Gastrocnemius medialis (tissue), 4 donors: ENCODE measurements at regions of chr1 and their contacts with region 1.

Region 1: DNA sequence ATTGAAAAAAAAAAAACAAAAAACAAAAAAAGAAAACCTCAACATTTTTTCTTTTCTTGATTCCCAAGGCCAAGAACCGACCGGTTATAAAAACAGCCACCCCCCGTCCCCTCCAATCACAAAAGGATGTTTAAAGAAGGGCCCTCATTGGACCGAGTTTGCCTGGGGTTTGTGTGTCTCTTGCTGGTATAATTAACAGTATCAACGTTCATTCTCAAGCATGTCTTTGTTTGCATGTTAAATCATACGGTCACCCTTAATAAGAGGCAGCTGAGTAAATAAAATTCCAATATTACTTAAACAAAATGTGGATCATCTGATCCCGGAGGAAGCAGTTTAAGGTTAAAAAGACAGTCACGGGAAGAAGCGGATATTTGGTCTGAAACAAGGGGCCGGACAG is 201.1 kb downstream of the PRDM2 start:
- DNase-seq: no peak
- ATAC-seq: no peak
- H3K4me3 ChIP-seq: no peak overlapping the region
- H3K27ac ChIP-seq: no peak overlapping the region
- H3K4me1 ChIP-seq: no peaks in the 10 kb centered on the region
- H3K27me3 ChIP-seq: no peaks in the 10 kb centered on the region
- CTCF ChIP-seq: no peak
- POLR2A ChIP-seq: no peak

Region 2: GRCh38 chr1:13864760-13865159 is 36.3 kb before region 1 on chr1:
- in situ Hi-C with region 1: no loop called
- intact Hi-C with region 1: loop called (anchors 5 kb)
- DNase-seq: no peak
- ATAC-seq: no peak
- H3K4me3 ChIP-seq: no peak overlapping the region
- H3K27ac ChIP-seq: no peak overlapping the region
- H3K4me1 ChIP-seq: no peaks in the 10 kb centered on the region
- H3K27me3 ChIP-seq: no peaks in the 10 kb centered on the region
- CTCF ChIP-seq: no peak
- POLR2A ChIP-seq: no peak